ENCODE measurements at regions of chr22 and their contacts with region 1.

Region 1: GRCh38 chr22:35921777-35922176 is 106.8 kb downstream of the RBFOX2 start:
- DNase-seq: peak; percentile 77 to 86
- H3K4me3 ChIP-seq: no peak overlapping the region
- H3K27ac ChIP-seq: peak overlapping the region; percentile 71
- H3K4me1 ChIP-seq: peaks cover 30% of the 10 kb centered on the region
- H3K27me3 ChIP-seq: no peaks in the 10 kb centered on the region
- CTCF ChIP-seq: peak; percentile 72

Region 2: DNA sequence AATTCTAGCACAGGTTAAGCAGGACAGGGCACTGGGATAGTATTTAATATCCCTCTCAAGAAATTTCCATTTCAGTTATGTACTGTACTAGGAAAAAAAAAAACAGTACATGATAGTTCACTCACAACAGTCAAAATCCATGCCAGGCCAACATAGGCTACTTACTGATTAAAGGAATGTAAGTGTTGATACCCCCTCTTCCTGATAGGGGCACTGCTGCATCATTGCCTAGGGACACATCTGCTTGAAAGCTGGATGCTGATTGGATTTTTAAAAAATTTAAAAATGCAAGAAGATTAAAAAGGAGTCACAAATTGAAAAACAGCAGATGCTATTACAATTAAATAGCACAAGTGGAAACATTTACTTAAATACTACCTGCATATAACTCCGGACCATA is 160.7 kb before region 1 on chr22:
- CTCF ChIA-PET with region 1: no interaction called
- POLR2A ChIA-PET with region 1: no interaction called
- intact Hi-C with region 1: loop called (anchors 2 kb)
- DNase-seq: no peak
- H3K4me3 ChIP-seq: no peak overlapping the region
- H3K27ac ChIP-seq: no peak overlapping the region
- H3K4me1 ChIP-seq: 0 out of 2 replicates have a peak, but pooled peaks cover 3% of the 10 kb centered on the region
- H3K27me3 ChIP-seq: no peaks in the 10 kb centered on the region
- CTCF ChIP-seq: peak; percentile 43; the same call in 1 of the 2 replicates

Region 3: DNA sequence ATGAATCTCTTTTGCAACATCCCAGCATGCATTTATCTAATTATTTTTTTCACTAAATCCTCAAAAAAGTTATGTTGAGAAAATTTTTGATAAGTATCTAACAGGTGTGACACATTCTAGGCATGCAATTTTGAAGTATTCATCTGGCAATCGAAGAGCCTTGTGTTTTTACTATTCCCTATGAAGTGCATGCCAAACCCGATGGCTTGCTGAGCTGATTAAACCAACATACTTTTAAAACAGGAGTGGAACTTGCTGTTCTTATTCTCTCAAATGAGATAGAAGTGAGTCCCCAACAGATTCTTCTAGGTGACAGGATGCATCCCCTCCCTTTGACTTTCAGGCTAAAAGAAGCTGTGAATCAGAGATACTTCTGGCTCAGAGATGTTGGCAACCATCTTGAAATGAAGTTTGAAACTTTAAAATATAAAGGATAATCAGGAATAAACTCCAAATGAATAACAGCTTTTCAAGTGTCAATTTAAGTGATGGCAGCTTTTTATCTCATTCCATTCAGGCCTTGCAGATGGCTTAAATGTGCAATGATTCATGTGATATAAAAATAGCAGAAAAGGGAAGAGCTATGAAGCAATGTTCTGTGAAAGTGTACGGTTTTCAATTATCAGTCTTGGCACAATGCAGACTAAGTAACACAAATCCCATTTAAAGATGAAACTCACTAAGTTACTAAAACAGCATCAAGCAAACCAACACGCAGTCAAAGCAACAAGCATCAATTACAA is 136.4 kb before region 1 on chr22:
- CTCF ChIA-PET with region 1: no interaction called
- POLR2A ChIA-PET with region 1: interaction called, 3 read pairs
- intact Hi-C with region 1: loop called (anchors 5 kb)
- DNase-seq: no peak
- H3K4me3 ChIP-seq: no peak overlapping the region
- H3K27ac ChIP-seq: peak overlapping the region; percentile 94
- H3K4me1 ChIP-seq: peaks cover 34% of the 10 kb centered on the region
- H3K27me3 ChIP-seq: no peaks in the 10 kb centered on the region
- CTCF ChIP-seq: no peak

Region 4: GRCh38 chr22:35947794-35948425 is 26.1 kb after region 1 on chr22:
- CTCF ChIA-PET with region 1: interaction called, 10 read pairs
- POLR2A ChIA-PET with region 1: no interaction called
- intact Hi-C with region 1: no loop called
- DNase-seq: no peak
- H3K4me3 ChIP-seq: no peak overlapping the region
- H3K27ac ChIP-seq: no peak overlapping the region
- H3K4me1 ChIP-seq: no peaks in the 10 kb centered on the region
- H3K27me3 ChIP-seq: no peaks in the 10 kb centered on the region
- CTCF ChIP-seq: no peak

Measured in PC-9 (cell line).